MCF 10A (cell line): ENCODE measurements at regions of chr21 and their contacts with region 1.

Region 1: DNA sequence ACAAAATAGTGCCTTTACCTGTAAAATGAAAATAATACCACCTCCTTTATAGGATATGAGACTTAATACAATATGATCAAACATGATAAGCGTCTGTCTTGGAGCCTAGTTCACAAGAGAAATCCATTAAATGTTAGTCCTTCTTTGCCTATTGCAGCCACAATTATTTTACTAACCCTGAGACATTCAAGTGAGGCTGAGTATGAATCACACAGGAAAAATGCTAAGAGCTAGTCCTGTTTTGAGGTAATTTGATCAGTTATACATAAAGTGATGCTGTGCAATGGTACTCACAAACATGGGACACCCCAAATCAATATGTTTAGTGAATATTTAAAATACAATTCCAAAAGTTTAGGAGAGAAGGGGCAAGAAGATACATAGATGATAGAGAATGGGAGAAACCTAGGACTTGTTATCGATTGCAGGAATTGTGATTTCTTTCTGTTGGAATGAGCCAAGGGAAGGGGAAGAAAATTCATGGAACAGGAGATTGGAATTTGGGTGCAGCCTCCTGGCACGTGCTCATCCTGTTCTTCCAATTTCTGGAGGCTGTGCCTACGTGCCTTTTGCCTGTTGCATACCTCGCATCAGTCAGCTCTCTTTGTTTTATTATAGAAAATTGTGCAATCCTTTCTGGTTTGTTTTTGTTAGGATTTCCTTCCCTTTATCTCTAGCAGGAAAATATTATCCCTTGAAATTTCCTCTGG is 39.9 kb upstream of the BACH1 start:
- DNase-seq: peak; percentile 89
- H3K4me3 Mint-ChIP-seq: peak overlapping the region; percentile 47
- H3K27ac Mint-ChIP-seq: peak overlapping the region; percentile 95
- H3K4me1 Mint-ChIP-seq: peaks cover 55% of the 10 kb centered on the region
- H3K27me3 Mint-ChIP-seq: no peaks in the 10 kb centered on the region
- CTCF ChIP-seq: no peak

Region 2: GRCh38 chr21:29145354-29145782 is 113.4 kb before region 1 on chr21:
- CTCF ChIA-PET with region 1: no interaction called
- POLR2A ChIA-PET with region 1: interaction called, 17 read pairs
- intact Hi-C with region 1: no loop called
- DNase-seq: peak; percentile 91
- H3K4me3 Mint-ChIP-seq: peak overlapping the region; percentile 39
- H3K27ac Mint-ChIP-seq: peak overlapping the region; percentile 92
- H3K4me1 Mint-ChIP-seq: peaks cover 23% of the 10 kb centered on the region
- H3K27me3 Mint-ChIP-seq: no peaks in the 10 kb centered on the region
- CTCF ChIP-seq: no peak

Region 3: DNA sequence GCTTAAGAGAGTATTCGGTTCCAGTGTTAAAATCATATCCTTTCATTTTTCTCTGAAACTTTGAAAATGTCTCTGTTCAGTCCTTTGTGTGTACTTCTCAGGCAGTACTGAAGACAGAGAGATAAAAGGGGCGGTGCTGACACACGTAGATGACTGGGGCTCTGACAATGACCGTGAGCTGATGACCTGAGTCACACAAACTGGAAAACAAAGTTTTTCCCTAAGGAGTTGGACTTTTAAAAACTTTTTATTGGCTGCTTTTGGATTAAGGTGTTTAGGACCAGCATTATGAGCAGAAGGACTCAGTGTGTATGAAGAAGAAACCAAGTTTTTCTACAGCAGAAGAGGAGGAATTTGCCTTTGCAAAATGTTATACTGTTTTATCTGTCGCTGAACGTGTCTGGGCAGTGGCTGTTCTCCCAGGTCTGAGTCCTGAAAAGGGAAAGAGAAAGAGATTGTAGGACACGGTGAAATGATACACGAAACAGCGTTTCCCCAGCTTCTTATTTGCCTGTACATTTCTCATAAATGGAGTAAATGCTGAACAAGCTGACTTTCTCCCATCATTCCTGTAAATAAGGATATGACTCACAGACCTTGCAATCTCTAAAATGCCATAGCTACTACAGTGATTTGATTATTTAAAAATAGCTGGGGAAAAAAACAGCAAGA is 76.8 kb before region 1 on chr21:
- CTCF ChIA-PET with region 1: interaction called, 4 read pairs
- POLR2A ChIA-PET with region 1: interaction called, 27 read pairs
- intact Hi-C with region 1: no loop called
- DNase-seq: peak; percentile 78
- H3K4me3 Mint-ChIP-seq: peak overlapping the region; percentile 82
- H3K27ac Mint-ChIP-seq: peak overlapping the region; percentile 99
- H3K4me1 Mint-ChIP-seq: peaks cover 31% of the 10 kb centered on the region
- H3K27me3 Mint-ChIP-seq: no peaks in the 10 kb centered on the region
- CTCF ChIP-seq: no peak

Region 4: DNA sequence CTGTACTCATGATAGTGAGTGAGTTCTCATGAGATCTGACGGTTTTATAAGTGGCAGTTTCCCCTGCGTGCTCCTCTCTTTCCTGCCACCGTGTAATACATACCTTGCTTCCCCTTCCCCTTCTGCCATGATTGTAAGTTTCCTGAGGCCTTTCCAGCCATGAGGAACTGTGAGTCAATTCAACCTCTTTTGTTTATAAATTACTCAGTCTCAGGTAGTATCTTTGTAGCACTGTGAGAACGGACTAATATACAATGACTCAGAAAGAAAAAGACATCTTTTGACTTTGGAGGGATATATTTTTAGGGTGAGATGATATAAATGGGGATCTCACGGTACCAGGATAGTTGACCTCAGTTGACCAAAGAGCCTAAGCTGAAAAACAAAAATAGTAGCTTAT is 34.8 kb before region 1 on chr21:
- CTCF ChIA-PET with region 1: interaction called, 3 read pairs
- POLR2A ChIA-PET with region 1: interaction called, 12 read pairs
- intact Hi-C with region 1: no loop called
- DNase-seq: no peak
- H3K4me3 Mint-ChIP-seq: no peak overlapping the region
- H3K27ac Mint-ChIP-seq: no peak overlapping the region
- H3K4me1 Mint-ChIP-seq: peaks cover 10% of the 10 kb centered on the region
- H3K27me3 Mint-ChIP-seq: no peaks in the 10 kb centered on the region
- CTCF ChIP-seq: no peak

Region 5: GRCh38 chr21:29238967-29239290 is 19.9 kb before region 1 on chr21:
- CTCF ChIA-PET with region 1: interaction called, 4 read pairs
- POLR2A ChIA-PET with region 1: interaction called, 115 read pairs
- intact Hi-C with region 1: no loop called
- DNase-seq: peak; percentile 41
- H3K4me3 Mint-ChIP-seq: no peak overlapping the region
- H3K27ac Mint-ChIP-seq: no peak overlapping the region
- H3K4me1 Mint-ChIP-seq: peaks cover 23% of the 10 kb centered on the region
- H3K27me3 Mint-ChIP-seq: no peaks in the 10 kb centered on the region
- CTCF ChIP-seq: no peak

Region 6: DNA sequence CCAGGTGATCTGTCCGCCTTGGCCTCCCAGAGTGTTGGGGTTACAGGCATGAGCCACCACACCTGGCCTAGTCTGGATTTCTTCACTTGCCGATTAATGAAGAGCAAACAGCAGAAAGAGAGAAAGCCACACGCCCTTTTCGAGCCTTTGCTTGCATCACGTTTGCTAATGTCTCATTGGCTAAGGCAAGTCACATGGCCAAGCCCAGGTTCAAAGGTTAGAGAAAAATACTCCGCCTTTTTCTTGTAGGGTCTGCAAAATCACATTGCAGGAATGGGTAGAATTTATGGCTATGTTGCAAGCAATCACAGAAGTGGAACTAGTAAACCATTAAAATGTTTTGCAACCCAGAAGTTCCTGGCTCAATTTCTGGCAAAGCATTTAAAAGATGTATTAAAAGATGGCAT is 13.1 kb after region 1 on chr21:
- CTCF ChIA-PET with region 1: interaction called, 3 read pairs
- POLR2A ChIA-PET with region 1: interaction called, 28 read pairs
- intact Hi-C with region 1: no loop called
- DNase-seq: no peak
- H3K4me3 Mint-ChIP-seq: no peak overlapping the region
- H3K27ac Mint-ChIP-seq: no peak overlapping the region
- H3K4me1 Mint-ChIP-seq: no peaks in the 10 kb centered on the region
- H3K27me3 Mint-ChIP-seq: no peaks in the 10 kb centered on the region
- CTCF ChIP-seq: no peak